Ovary (tissue), 10 donors: ENCODE measurements at regions of chr10 and their contacts with region 1.

Region 1: DNA sequence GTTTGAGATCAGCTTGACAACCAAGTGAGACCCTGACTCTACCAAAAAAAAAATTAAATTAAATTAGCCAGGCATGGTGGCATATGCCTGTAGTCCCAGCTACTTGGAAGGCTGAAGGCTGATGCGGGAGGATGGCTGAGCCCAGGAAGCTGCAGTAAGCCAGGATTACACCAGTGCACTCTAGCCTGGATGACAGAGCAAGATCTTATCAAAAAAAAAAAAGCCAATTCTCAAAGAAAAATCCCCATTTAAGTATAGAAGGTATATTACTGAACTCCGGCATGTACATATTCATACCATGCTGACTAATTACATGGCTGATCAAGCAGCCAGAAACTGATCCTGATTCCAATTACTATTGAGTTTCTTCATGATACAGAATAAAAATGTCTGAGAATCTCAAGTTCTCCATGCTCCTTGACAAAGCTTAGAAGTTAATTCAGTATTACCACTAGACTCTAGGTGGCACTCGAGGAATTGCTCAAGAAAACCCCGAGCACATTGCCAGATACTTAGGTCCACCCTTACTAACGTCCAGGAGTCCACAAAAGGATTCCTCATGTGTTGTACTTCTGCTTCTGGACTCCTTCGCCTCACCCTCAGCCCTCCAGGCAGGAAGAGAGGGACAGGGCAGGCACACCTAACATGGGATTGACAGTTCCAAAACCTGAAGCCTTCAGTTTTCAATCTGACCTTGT is 148.9 kb downstream of the PARD3 start:
- DNase-seq: peak in 4 of 5 donors; percentile 45 to 68 (median 49)
- H3K4me3 ChIP-seq: no peak overlapping the region
- H3K27ac ChIP-seq: no peak overlapping the region
- H3K4me1 ChIP-seq: no peaks in the 10 kb centered on the region
- H3K27me3 ChIP-seq: no peaks in the 10 kb centered on the region
- CTCF ChIP-seq: peak; percentile 47 to 73 (median 73)
- EP300 ChIP-seq: no peak
- POLR2A ChIP-seq: no peak

Region 2: DNA sequence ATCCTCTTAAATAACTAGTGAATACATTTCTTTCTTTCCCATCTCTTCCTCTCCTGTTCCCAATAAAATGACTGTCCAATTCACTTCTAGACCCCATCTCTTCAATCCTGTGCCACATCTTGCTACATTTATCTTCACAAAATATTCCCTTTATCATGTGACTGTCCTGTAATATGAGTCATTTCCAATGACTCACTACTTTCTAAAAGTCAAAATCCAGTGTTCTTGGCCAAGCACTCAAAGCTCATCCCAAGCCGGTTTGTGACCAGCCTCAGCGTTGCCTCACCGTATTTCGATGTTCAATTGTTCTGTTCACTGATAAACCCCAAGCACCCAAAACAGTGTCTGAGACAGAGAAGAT is 44.2 kb after region 1 on chr10:
- intact Hi-C with region 1: loop called in 1 of 4 experiments (anchors 10 kb)
- DNase-seq: peak in 3 of 5 donors; percentile 41 to 69 (median 45)
- H3K4me3 ChIP-seq: no peak overlapping the region
- H3K27ac ChIP-seq: peak overlapping the region in 1 of 2 donors; percentile 18
- H3K4me1 ChIP-seq: peaks cover 34% of the 10 kb centered on the region
- H3K27me3 ChIP-seq: no peaks in the 10 kb centered on the region
- CTCF ChIP-seq: no peak
- EP300 ChIP-seq: no peak
- POLR2A ChIP-seq: no peak

Region 3: GRCh38 chr10:34815185-34816084 is 149.3 kb after region 1 on chr10 and contains the start of gene PARD3:
- intact Hi-C with region 1: loop called (anchors 10 kb)
- DNase-seq: peak; percentile 77 to 82 (median 78)
- H3K4me3 ChIP-seq: peak within 1 kb of the TSS; percentile 67
- H3K27ac ChIP-seq: peak within 1 kb of the TSS; percentile 94 to 97
- H3K4me1 ChIP-seq: peaks cover 13% of the 10 kb centered on the region
- H3K27me3 ChIP-seq: no peaks in the 10 kb centered on the region
- CTCF ChIP-seq: no peak
- EP300 ChIP-seq: no peak
- POLR2A ChIP-seq: no peak
- total RNA-seq, gene PARD3: 43.1 to 92.3 (median 67.1) TPM

Region 4: GRCh38 chr10:34994565-34995142 is 328.5 kb after region 1 on chr10:
- intact Hi-C with region 1: loop called in 1 of 4 experiments (anchors 10 kb)
- DNase-seq: peak; percentile 34 to 48 (median 44)
- H3K4me3 ChIP-seq: no peak overlapping the region
- H3K27ac ChIP-seq: no peak overlapping the region
- H3K4me1 ChIP-seq: no peaks in the 10 kb centered on the region
- H3K27me3 ChIP-seq: no peaks in the 10 kb centered on the region
- CTCF ChIP-seq: peak; percentile 29 to 43 (median 38)
- EP300 ChIP-seq: no peak
- POLR2A ChIP-seq: no peak

Region 5: DNA sequence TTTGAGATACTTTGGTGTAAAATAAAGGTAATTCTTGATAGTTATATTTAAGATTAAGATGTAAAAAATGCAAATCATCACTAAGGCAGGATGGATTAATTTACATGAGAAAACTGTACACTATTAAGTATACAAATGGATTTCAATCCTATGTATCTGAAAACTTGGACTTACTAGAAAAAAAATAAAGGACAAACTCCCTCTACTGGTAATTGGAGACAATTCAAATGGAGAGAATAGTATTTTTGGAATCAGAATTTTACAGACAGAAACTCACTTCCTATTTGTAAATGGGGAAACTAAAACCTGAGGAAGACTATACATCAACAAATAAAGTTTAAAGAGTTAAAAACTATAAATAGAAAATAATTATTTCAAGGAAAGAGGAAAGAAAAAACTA is 361.4 kb after region 1 on chr10:
- intact Hi-C with region 1: loop called in 3 of 4 experiments (anchors 10 kb)
- DNase-seq: no peak
- H3K4me3 ChIP-seq: no peak overlapping the region
- H3K27ac ChIP-seq: no peak overlapping the region
- H3K4me1 ChIP-seq: no peaks in the 10 kb centered on the region
- H3K27me3 ChIP-seq: no peaks in the 10 kb centered on the region
- CTCF ChIP-seq: peak in 1 of 3 donors; percentile 20
- EP300 ChIP-seq: no peak
- POLR2A ChIP-seq: no peak

Region 6: DNA sequence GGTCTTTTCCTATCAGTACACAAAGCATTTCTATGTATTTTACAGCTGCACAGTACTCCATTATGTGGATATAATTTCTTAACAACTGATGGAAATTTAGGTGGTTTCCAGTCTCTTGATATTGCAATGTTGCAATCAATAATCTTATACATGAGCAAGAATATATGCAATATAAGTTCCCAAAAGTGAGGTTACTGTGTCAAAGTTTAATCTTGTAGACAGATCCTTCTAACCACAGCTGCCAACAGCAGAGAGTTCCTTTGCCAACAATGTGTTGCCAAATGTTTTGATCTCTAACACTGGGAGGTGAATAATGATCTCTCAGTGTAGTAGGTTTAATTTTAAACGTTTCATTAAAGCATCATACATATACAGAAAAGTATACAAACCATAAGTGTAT is 369.4 kb after region 1 on chr10:
- intact Hi-C with region 1: loop called in 1 of 4 experiments (anchors 10 kb)
- DNase-seq: no peak
- H3K4me3 ChIP-seq: no peak overlapping the region
- H3K27ac ChIP-seq: no peak overlapping the region
- H3K4me1 ChIP-seq: no peaks in the 10 kb centered on the region
- H3K27me3 ChIP-seq: no peaks in the 10 kb centered on the region
- CTCF ChIP-seq: no peak
- EP300 ChIP-seq: no peak
- POLR2A ChIP-seq: no peak